Left ventricle myocardium superior (tissue), 1 donor: ENCODE measurements at regions of chr13 and their contacts with region 1.

Region 1: DNA sequence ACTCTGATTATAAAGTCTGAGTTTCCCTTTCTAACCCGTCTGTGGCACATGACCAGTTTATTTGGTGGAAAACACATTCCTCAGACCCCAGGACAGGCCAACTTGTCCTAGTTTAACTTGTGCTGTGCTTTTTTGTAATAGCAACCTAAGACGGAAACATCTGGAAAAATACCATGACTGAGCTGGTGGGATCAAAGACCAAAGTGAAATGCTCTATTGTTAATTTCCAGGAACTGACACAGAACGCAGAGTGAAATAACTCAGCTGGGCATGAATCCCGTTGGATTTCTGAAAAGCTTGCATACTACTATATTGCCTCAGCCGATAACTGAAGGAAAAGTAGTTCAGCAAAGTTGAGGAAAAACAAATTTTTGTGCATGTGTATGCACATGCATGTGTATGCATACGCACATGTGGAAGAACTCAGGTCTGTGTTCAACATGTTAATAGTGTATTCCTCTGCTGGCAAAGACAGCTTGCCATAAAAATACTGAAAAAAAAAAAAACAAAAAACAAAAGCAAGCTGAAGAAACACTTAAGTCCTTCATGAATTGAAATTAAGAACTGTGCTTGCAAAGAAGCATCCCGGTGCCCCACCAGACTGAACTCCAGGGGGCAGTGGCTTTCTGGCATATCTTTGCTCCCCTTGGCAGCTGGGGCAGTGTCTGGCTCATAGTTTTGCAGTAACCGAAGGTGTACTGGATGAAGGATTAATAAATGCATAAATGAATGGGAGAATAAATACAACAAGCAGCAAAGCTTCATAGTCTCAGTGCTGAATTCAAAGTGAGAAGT is 187.8 kb downstream of the LHFPL6 start:
- DNase-seq: peak; percentile 71
- ATAC-seq: peak; percentile 68

Region 2: DNA sequence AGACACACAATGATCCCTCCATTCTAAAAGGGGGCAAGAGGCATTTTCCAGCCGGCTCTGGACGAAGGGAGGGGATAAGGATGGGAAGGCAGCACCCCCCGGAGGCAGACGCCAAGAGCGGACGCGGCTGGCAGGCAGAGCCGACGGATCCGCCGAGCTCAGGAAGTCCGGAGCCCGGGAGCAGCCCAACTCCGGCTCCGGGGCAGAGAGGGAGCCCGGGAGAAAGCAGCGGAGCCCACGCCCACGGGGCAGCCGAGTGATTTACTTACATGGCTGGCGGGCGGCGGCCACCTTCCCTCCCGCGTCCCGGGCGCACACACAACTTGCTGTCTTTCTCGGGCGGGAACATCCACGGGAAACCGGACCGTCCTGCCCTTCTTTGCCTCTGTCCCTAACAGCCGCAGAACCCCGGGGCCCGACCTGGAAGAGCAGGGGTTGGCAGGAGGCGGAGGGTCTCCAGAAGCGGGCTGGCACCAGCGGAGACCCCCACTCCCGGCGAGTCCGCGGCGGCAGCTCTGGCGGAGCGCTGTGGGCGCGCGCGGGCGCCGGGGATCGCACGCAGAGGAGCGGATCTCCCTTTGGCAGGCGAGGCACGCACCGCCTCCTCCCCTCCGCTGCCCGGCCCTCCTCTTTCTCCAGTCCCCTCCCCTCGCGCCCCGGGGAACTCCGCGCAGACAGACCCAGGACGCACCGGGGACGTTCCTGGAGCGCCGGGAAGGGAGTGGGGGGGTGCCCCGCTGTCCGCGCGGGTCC is 187.6 kb after region 1 on chr13 and contains the start of gene LHFPL6:
- intact Hi-C with region 1: loop called (anchors 5 kb)
- DNase-seq: peak; percentile 93
- ATAC-seq: peak; percentile 96
- total RNA-seq, gene LHFPL6: 54.3 TPM